Aorta (tissue), 5 donors: ENCODE measurements at regions of chr6 and their contacts with region 1.

Region 1: GRCh38 chr6:147202516-147203312 is 1.5 kb upstream of the STXBP5 start:
- DNase-seq: peak; percentile 84 to 87
- ATAC-seq: peak; percentile 95
- H3K4me3 ChIP-seq: peak overlapping the region; percentile 88 to 95
- H3K27ac ChIP-seq: peak overlapping the region; percentile 86 to 99
- H3K4me1 ChIP-seq: no peaks in the 10 kb centered on the region
- H3K27me3 ChIP-seq: no peaks in the 10 kb centered on the region

Region 2: GRCh38 chr6:146543211-146543939 is 659.3 kb before region 1 on chr6 and contains the start of gene RAB32:
- intact Hi-C with region 1: loop called in 1 of 2 experiments (anchors 10 kb)
- DNase-seq: peak; percentile 97 to 98
- ATAC-seq: peak; percentile 98
- H3K4me3 ChIP-seq: peak within 1 kb of the TSS; percentile 77 to 92
- H3K27ac ChIP-seq: peak within 1 kb of the TSS; percentile 97 to 99
- H3K4me1 ChIP-seq: no peaks in the 10 kb centered on the region
- H3K27me3 ChIP-seq: no peaks in the 10 kb centered on the region
- total RNA-seq, gene RAB32: 31.9 to 61.2 TPM

Region 3: GRCh38 chr6:146857180-146857979 is 345.3 kb before region 1 on chr6:
- intact Hi-C with region 1: loop called in 1 of 2 experiments (anchors 5 kb)
- DNase-seq: peak; percentile 92 to 96
- ATAC-seq: peak; percentile 98
- H3K4me3 ChIP-seq: no peak overlapping the region
- H3K27ac ChIP-seq: no peak overlapping the region
- H3K4me1 ChIP-seq: no peaks in the 10 kb centered on the region
- H3K27me3 ChIP-seq: no peaks in the 10 kb centered on the region

Region 4: DNA sequence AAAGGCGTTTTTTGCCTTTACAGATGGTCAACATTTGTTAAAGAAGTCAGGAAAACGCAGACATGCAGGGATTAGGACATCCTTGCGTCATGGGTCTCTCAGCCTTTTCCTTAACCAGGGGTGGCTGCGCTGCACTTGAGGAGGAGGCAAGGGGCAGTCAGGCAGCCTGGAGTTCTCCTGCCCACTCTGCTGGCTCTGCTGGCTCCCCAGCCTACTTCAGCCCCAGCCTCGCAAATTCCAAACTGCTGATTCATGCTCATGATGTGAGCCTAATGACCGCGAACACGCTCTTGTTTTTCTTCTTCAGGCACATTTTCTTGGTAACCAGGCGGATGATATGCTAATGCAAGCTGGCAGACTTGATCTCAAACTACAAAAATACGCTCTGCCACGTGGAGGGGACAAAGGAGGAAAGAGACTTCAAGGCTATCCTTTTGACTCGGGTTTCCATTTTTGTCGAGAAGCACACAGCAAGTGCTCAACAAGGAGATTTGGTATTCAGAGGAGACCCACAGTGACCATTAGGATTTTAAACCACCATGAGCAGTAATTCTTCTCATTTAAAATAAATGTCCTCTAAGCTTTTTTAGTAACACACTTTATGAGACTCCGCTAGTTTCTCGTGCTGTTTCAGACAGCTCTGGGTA is 288.7 kb before region 1 on chr6:
- intact Hi-C with region 1: loop called (anchors 1 to 10 kb)
- DNase-seq: peak; percentile 85 to 86
- ATAC-seq: peak; percentile 91
- H3K4me3 ChIP-seq: peak overlapping the region in 1 of 2 donors; percentile 24
- H3K27ac ChIP-seq: peak overlapping the region; percentile 9 to 95
- H3K4me1 ChIP-seq: peaks cover 0 to 4% of the 10 kb centered on the region in 2 donors
- H3K27me3 ChIP-seq: no peaks in the 10 kb centered on the region

Region 5: DNA sequence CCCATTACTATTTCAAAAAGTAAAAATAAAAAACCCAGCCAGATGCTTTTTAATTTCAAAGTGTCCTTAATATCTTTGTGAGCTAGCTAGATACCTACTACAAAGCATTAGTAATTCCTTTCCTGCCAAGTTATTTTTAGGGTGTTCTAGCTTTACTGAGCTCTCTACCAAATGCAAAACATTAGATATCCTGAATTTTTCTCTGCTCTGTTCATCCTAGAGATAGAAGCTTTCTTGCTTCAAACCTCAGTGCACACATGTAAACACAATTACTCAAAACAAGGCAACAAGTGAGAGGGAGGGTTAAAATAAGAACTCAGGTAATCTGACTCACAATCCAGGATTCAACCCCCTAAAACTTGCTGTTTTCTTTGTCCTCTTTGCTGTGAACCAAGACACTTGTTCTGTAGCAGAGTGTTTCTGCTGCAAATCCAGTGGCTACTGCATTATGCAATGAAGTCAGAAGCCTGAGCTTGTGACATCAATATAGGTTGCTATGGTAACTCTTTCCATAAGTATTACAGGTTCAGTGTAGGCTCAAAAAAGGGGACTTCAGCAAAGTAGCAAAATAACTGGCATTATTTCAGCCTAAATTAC is 71.1 kb before region 1 on chr6:
- intact Hi-C with region 1: no loop called
- DNase-seq: no peak
- ATAC-seq: no peak
- H3K4me3 ChIP-seq: no peak overlapping the region
- H3K27ac ChIP-seq: no peak overlapping the region
- H3K4me1 ChIP-seq: no peaks in the 10 kb centered on the region
- H3K27me3 ChIP-seq: no peaks in the 10 kb centered on the region

Region 6: DNA sequence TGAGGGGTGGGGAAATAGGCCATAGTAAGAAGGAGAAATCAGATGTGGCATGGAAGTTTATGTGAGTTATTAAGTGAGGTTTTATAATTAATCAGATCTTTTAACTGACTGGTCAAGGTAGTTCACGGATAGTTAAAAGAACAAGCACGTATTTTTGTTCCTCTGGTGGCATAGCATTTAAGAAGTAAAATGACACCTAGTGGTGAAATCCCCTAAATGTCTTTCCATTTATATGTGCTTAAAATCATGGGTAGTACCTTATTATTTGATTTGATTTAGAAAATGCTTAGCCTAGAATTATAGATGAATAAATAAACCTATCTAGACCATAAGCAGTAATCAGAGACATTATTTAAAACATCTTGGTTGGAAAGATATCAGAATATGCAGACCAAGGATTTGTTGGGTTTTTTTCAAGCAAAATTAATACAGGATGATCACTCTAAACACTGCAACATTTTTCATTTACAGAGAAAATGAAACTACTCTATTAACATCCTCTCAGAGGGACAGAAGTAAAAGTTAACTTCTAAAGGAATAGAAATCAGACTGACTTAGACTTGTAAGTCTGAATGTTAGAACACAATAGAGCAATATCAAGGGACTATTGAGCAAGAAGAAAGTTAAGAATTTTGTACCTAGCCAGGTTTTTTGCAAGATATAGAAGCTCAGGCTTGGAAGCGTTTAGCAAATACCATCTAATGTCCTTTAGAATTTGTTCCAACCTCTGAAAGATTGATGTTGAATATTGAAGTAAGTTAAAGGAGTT is 82.6 kb after region 1 on chr6:
- intact Hi-C with region 1: loop called in 1 of 2 experiments (anchors 5 kb)
- DNase-seq: no peak
- ATAC-seq: peak; percentile 81
- H3K4me3 ChIP-seq: no peak overlapping the region
- H3K27ac ChIP-seq: no peak overlapping the region
- H3K4me1 ChIP-seq: peaks cover 0 to 2% of the 10 kb centered on the region in 2 donors
- H3K27me3 ChIP-seq: no peaks in the 10 kb centered on the region